Naive thymus-derived CD4-positive, alpha-beta T cell (primary cell): ENCODE measurements at regions of chr17 and their contacts with region 1.

Region 1: DNA sequence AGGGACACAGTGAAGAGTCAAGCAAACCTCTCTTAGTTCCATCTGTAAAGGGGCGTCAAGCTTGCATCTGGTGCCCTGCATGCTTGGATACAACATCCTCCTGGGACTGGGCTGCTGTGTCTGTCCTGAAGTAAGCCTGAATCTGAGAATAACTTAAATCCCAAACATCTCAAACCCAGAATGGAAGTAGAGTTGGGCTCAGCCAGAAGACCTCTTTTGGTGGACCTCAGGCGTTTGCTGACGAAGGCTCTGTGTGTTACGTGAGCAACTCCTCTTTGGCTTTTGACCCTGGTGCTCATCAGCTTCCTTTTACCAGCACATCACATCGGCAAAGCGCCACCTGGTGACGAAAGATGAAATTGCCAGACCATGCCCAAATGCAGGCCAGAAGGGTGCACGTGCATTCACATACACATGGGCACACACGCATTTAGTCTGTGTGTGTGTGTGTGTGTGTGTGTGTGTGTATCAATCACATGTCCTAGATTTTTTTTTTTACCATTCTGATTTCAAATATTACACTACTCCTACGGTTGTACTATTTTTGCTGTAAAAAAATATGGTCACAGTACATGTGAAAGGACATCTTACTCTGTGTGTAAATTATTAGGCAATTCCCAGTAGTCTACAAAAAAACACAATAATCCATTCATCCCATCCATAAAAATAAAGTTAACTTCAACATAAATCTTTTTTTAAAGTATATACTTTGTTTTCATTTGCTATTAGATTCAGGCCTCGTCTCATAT is 41.1 kb upstream of the FOXJ1 start:
- DNase-seq: peak; percentile 84 to 94 (median 89)
- ATAC-seq: peak; percentile 92
- H3K4me3 ChIP-seq: no peak overlapping the region
- H3K4me3 Mint-ChIP-seq: peak overlapping the region; percentile 11 to 77 (median 67)
- H3K27ac ChIP-seq: peak overlapping the region; percentile 52
- H3K27ac Mint-ChIP-seq: peak overlapping the region; percentile 91 to 99 (median 96)
- H3K4me1 ChIP-seq: peaks cover 33 to 63% of the 10 kb centered on the region in 2 donors
- H3K4me1 Mint-ChIP-seq: peaks cover 33 to 78% (median 61%) of the 10 kb centered on the region in 7 donors
- H3K27me3 ChIP-seq: no peaks in the 10 kb centered on the region
- H3K27me3 Mint-ChIP-seq: no peaks in the 10 kb centered on the region

Region 2: GRCh38 chr17:76121932-76122430 is 60.2 kb before region 1 on chr17:
- CTCF ChIA-PET with region 1: interaction called, 187 read pairs
- POLR2A ChIA-PET with region 1: interaction called, 90 read pairs
- intact Hi-C with region 1: loop called (anchors 1 kb)
- DNase-seq: no peak
- ATAC-seq: peak; percentile 33
- H3K4me3 ChIP-seq: peak overlapping the region; percentile 63
- H3K4me3 Mint-ChIP-seq: peak overlapping the region in 7 of 10 donors; percentile 25 to 77 (median 53)
- H3K27ac ChIP-seq: peak overlapping the region; percentile 52
- H3K27ac Mint-ChIP-seq: peak overlapping the region; percentile 40 to 91 (median 73)
- H3K4me1 ChIP-seq: peaks cover 0 to 25% of the 10 kb centered on the region in 2 donors
- H3K4me1 Mint-ChIP-seq: peaks cover 10 to 39% (median 27%) of the 10 kb centered on the region in 7 donors
- H3K27me3 ChIP-seq: no peaks in the 10 kb centered on the region
- H3K27me3 Mint-ChIP-seq: no peaks in the 10 kb centered on the region

Region 3: GRCh38 chr17:76153640-76154039 is 28.6 kb before region 1 on chr17:
- CTCF ChIA-PET with region 1: interaction called, 80 read pairs
- POLR2A ChIA-PET with region 1: interaction called, 162 read pairs
- intact Hi-C with region 1: loop called in 1 of 2 experiments (anchors 1 kb)
- DNase-seq: no peak
- ATAC-seq: no peak
- H3K4me3 ChIP-seq: no peak overlapping the region
- H3K4me3 Mint-ChIP-seq: peak overlapping the region in 7 of 10 donors; percentile 11 to 81 (median 30)
- H3K27ac ChIP-seq: peak overlapping the region; percentile 52
- H3K27ac Mint-ChIP-seq: peak overlapping the region in 8 of 9 donors; percentile 93 to 99 (median 98)
- H3K4me1 ChIP-seq: peaks cover 13 to 48% of the 10 kb centered on the region in 2 donors
- H3K4me1 Mint-ChIP-seq: peaks cover 24 to 73% (median 64%) of the 10 kb centered on the region in 7 donors
- H3K27me3 ChIP-seq: no peaks in the 10 kb centered on the region
- H3K27me3 Mint-ChIP-seq: no peaks in the 10 kb centered on the region

Region 4: GRCh38 chr17:76240461-76241203 is 58.4 kb after region 1 on chr17 and contains the start of gene RNF157:
- CTCF ChIA-PET with region 1: interaction called, 6 read pairs
- POLR2A ChIA-PET with region 1: interaction called, 30 read pairs
- intact Hi-C with region 1: no loop called
- DNase-seq: peak; percentile 57 to 78 (median 69)
- ATAC-seq: peak; percentile 97
- H3K4me3 ChIP-seq: peak within 1 kb of the TSS; percentile 70
- H3K4me3 Mint-ChIP-seq: peak within 1 kb of the TSS; percentile 87 to 97 (median 94)
- H3K27ac ChIP-seq: peak within 1 kb of the TSS; percentile 78
- H3K27ac Mint-ChIP-seq: peak within 1 kb of the TSS; percentile 89 to 96 (median 92)
- H3K4me1 ChIP-seq: peaks cover 10 to 49% of the 10 kb centered on the region in 2 donors
- H3K4me1 Mint-ChIP-seq: peaks cover 27 to 80% (median 73%) of the 10 kb centered on the region in 7 donors
- H3K27me3 ChIP-seq: no peaks in the 10 kb centered on the region
- H3K27me3 Mint-ChIP-seq: peaks cover 0 to 4% (median 0%) of the 10 kb centered on the region in 5 donors
- total RNA-seq, gene RNF157: 49.2 to 96.3 (median 50.8) TPM

Region 5: GRCh38 chr17:76264755-76265596 is 82.8 kb after region 1 on chr17 and contains the start of gene UBALD2:
- CTCF ChIA-PET with region 1: interaction called, 7 read pairs
- POLR2A ChIA-PET with region 1: interaction called, 240 read pairs
- intact Hi-C with region 1: loop called in 1 of 2 experiments (anchors 1 kb)
- DNase-seq: peak; percentile 95 to 99 (median 98)
- ATAC-seq: peak; percentile 90
- H3K4me3 ChIP-seq: peak within 1 kb of the TSS; percentile 71
- H3K4me3 Mint-ChIP-seq: peak within 1 kb of the TSS; percentile 87 to 95 (median 92)
- H3K27ac ChIP-seq: peak within 1 kb of the TSS; percentile 92
- H3K27ac Mint-ChIP-seq: peak within 1 kb of the TSS; percentile 81 to 98 (median 94)
- H3K4me1 ChIP-seq: peaks cover 46 to 58% of the 10 kb centered on the region in 2 donors
- H3K4me1 Mint-ChIP-seq: peaks cover 47 to 70% (median 61%) of the 10 kb centered on the region in 7 donors
- H3K27me3 ChIP-seq: no peaks in the 10 kb centered on the region
- H3K27me3 Mint-ChIP-seq: peaks cover 0 to 3% (median 0%) of the 10 kb centered on the region in 5 donors
- total RNA-seq, gene UBALD2: 103 to 263 (median 241) TPM